CD14-positive monocyte (primary cell): ENCODE measurements at regions of chr5 and their contacts with region 1.

Region 1: GRCh38 chr5:170434966-170435605 is 45.9 kb upstream of the KCNMB1 start:
- DNase-seq: peak; percentile 48 to 66 (median 63)
- H3K4me3 ChIP-seq: no peak overlapping the region
- H3K4me3 Mint-ChIP-seq: no peak overlapping the region
- H3K27ac ChIP-seq: no peak overlapping the region
- H3K27ac Mint-ChIP-seq: no peak overlapping the region
- H3K4me1 ChIP-seq: no peaks in the 10 kb centered on the region
- H3K4me1 Mint-ChIP-seq: no peaks in the 10 kb centered on the region
- H3K27me3 ChIP-seq: no peaks in the 10 kb centered on the region
- H3K27me3 Mint-ChIP-seq: peaks cover 0 to 6% (median 0%) of the 10 kb centered on the region in 3 donors
- CTCF ChIP-seq: peak; percentile 99

Region 2: GRCh38 chr5:168879929-168880328 is 1555.2 kb before region 1 on chr5:
- intact Hi-C with region 1: no loop called
- DNase-seq: no peak
- H3K4me3 ChIP-seq: no peak overlapping the region
- H3K4me3 Mint-ChIP-seq: no peak overlapping the region
- H3K27ac ChIP-seq: no peak overlapping the region
- H3K27ac Mint-ChIP-seq: no peak overlapping the region
- H3K4me1 ChIP-seq: no peaks in the 10 kb centered on the region
- H3K4me1 Mint-ChIP-seq: no peaks in the 10 kb centered on the region
- H3K27me3 ChIP-seq: peaks cover 0 to 3% of the 10 kb centered on the region in 2 donors
- H3K27me3 Mint-ChIP-seq: peaks cover 2 to 12% (median 11%) of the 10 kb centered on the region in 3 donors
- CTCF ChIP-seq: no peak

Region 3: DNA sequence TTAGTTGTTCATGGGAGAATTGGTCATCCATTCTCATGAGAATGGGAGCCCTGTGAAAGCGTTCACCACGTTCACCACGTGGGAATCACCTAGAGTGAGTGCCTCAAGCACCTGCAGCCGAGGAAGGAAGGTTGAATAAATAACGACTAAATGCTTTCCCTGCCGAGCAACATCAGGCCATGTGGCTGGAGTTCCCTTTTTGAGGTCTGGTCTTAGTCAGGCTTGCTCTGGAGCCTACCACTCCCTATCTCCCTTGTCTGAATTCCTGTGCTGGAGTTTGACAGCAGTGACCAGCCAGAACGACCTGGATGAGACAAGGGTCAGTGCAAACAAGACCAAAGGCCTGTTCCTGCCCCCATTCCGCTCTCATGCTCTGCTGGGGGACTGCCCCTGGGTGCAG is 74.4 kb before region 1 on chr5:
- intact Hi-C with region 1: no loop called
- DNase-seq: peak; percentile 69 to 83 (median 82)
- H3K4me3 ChIP-seq: peak overlapping the region in 1 of 3 experiments; percentile 51
- H3K4me3 Mint-ChIP-seq: peak overlapping the region in 1 of 2 donors; percentile 63
- H3K27ac ChIP-seq: peak overlapping the region; percentile 84 to 96
- H3K27ac Mint-ChIP-seq: peak overlapping the region; percentile 90 to 99 (median 96)
- H3K4me1 ChIP-seq: peaks cover 93 to 100% of the 10 kb centered on the region in 2 donors
- H3K4me1 Mint-ChIP-seq: peaks cover 95% of the 10 kb centered on the region
- H3K27me3 ChIP-seq: no peaks in the 10 kb centered on the region
- H3K27me3 Mint-ChIP-seq: peaks cover 0 to 2% (median 1%) of the 10 kb centered on the region in 3 donors
- CTCF ChIP-seq: no peak

Region 4: DNA sequence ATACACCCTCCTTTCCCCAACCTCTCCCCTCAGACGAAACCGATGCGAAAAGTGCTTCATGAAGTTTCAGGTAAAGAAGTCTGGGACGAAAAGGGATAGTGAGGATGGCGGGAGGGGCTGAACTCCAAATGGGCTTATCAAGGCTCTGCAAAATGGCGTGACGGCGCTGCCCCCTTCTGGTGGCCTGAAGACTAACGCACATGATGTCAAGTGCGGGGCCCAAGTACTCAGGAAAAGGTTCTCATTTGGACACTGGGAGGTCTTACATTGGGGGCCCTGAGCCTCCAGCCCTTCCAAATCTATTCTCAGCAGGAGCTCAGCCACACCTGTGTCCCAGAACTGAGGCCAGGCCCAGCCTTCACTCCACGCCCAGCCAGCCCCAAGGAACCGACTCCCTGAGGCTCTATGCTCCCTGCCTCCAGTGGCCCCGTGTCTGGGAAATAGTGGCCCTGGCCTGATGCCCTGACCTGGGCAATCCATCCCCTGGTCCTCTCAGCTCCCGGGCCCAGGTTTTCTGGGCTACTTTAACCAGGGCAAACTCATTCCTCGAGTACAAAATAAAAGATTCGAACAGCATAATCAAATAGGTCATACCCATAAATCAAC is 188.6 kb after region 1 on chr5:
- intact Hi-C with region 1: loop called (anchors 2 kb)
- DNase-seq: peak; percentile 11 to 56 (median 44)
- H3K4me3 ChIP-seq: no peak overlapping the region
- H3K4me3 Mint-ChIP-seq: no peak overlapping the region
- H3K27ac ChIP-seq: no peak overlapping the region
- H3K27ac Mint-ChIP-seq: no peak overlapping the region
- H3K4me1 ChIP-seq: no peaks in the 10 kb centered on the region
- H3K4me1 Mint-ChIP-seq: peaks cover 3% of the 10 kb centered on the region
- H3K27me3 ChIP-seq: no peaks in the 10 kb centered on the region
- H3K27me3 Mint-ChIP-seq: peaks cover 5% of the 10 kb centered on the region in 3 donors
- CTCF ChIP-seq: peak; percentile 80

Region 5: GRCh38 chr5:170633235-170634081 is 198.4 kb after region 1 on chr5:
- intact Hi-C with region 1: loop called (anchors 2 kb)
- DNase-seq: no peak
- H3K4me3 ChIP-seq: peak overlapping the region in 1 of 3 experiments; percentile 30
- H3K4me3 Mint-ChIP-seq: peak overlapping the region; percentile 52 to 76
- H3K27ac ChIP-seq: no peak overlapping the region
- H3K27ac Mint-ChIP-seq: peak overlapping the region in 3 of 7 donors; percentile 39 to 75 (median 58)
- H3K4me1 ChIP-seq: peaks cover 12% of the 10 kb centered on the region in 2 donors
- H3K4me1 Mint-ChIP-seq: peaks cover 20% of the 10 kb centered on the region
- H3K27me3 ChIP-seq: peaks cover 0 to 6% of the 10 kb centered on the region in 2 donors
- H3K27me3 Mint-ChIP-seq: peaks cover 12 to 28% (median 21%) of the 10 kb centered on the region in 3 donors
- CTCF ChIP-seq: peak; percentile 59